Posterior cingulate gyrus (tissue), 11 donors: ENCODE measurements at regions of chr2 and their contacts with region 1.

Region 1: GRCh38 chr2:227471924-227472264 is at the start of gene AGFG1:
- DNase-seq: peak; percentile 76 to 98 (median 88)

Region 2: DNA sequence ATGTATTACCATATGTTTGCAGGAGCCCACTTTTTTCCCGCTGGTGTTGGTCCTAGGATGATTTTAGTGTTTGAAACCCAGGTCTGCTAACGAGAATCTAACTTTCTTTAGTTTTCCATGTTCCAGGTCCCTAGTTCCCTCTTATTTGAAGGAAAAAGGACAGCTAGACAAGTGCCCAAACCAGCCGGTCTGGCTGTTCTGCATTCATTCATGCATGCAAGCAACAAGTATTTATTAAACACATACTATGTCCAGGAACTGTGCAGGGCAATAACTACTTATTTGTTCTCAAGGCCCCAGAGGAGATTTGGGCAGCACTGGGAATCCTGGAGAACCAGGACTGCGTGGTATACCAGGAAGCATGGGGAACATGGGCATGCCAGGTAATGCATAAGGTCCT is 182.2 kb before region 1 on chr2:
- intact Hi-C with region 1: no loop called
- DNase-seq: no peak

Region 3: GRCh38 chr2:227324995-227325838 is 146.7 kb before region 1 on chr2 and contains the start of gene MFF:
- intact Hi-C with region 1: loop called (anchors 5 kb)
- DNase-seq: peak; percentile 89 to 98 (median 92)

Region 4: GRCh38 chr2:227406177-227407031 is 65.5 kb before region 1 on chr2:
- intact Hi-C with region 1: loop called (anchors 2 kb)
- DNase-seq: peak in 6 of 10 donors; percentile 37 to 90 (median 43)

Region 5: DNA sequence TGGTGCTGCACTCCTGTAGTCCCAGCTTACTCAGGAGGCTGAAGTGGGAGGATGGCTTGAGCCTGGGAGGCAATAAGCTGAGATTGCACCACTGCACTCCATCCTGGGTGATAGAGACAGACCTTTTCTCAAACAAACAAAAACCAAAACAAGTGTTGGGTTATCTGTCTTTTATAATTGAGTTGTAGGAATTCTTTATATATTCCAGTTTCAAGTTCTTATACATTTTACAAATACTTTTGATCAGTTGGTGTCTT is 47.1 kb after region 1 on chr2:
- intact Hi-C with region 1: no loop called
- DNase-seq: no peak

Region 6: GRCh38 chr2:227578651-227579050 is 106.8 kb after region 1 on chr2:
- intact Hi-C with region 1: loop called (anchors 10 kb)
- DNase-seq: no peak

Region 7: DNA sequence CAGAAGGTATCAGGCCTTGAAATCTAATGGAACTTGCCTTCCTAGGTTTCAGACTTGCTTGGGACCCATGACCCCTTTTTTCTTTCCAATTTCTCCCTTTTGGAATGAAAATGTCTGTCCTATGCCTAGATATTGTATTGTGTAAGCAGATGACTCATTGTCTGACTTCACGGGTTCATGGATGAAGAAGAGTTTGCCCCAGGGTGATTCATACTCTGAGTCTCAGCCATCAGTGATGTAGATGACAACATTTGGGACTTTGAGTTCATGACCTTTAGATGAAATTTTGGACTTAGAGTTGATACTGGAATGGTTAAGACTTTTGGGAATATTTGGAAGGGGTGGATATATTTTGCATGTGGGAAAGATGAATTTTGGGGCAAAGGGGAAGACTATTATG is 183.6 kb after region 1 on chr2:
- intact Hi-C with region 1: loop called (anchors 10 kb)
- DNase-seq: no peak

Region 8: DNA sequence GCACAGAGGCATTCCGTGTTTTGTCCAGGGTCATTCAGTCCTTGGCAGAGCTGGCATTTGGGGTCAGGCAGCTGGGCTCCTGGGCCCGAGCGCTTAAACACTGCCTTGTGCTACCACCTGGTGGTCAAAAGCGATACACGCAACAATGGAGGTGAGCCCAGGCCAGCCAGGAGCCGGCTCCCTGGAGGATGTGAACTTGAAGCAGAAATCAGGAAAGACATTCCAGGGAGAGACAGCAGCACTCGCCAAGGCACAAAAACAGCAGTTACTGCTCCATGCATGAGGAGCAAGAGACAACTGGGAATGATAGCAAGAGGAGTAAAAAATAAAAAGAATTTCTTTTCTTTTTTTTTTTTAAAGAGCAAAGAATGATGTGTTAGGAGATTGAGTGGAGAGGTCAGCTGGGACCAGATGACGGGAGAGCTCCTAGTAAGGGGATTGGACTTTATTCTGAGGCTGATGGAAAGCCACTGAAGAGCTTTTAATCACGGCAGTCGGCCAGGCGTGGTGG is 294.5 kb after region 1 on chr2:
- intact Hi-C with region 1: loop called (anchors 2 kb)
- DNase-seq: peak; percentile 59 to 96 (median 78)

Region 9: GRCh38 chr2:227862227-227862740 is 390.4 kb after region 1 on chr2:
- intact Hi-C with region 1: loop called (anchors 10 kb)
- DNase-seq: no peak